ENCODE measurements at regions of chr1 and their contacts with region 1.

Region 1: DNA sequence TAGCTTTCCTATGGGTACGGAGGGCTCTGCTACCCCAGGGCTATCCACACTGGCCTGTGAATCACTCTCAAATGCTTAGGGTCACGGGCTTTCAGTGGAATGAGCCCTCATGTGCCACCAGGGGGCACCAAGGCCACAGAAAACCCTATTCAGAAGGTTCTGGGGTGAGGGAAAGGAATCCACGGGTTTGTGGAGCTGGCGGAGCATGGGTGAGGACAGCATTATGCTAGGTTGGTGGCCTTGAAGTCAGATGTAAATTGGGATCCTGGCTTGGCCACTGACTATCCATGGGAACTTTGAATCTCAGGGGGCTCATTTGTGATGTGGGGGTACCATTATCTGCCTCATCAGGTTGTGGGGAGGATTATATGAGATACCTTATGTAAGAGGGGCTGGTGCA is 5.1 kb upstream of the LAMTOR5 start:
- DNase-seq: peak; percentile 52 to 63 (median 56)
- H3K4me3 ChIP-seq: no peak overlapping the region
- H3K4me3 Mint-ChIP-seq: no peak overlapping the region
- H3K27ac ChIP-seq: no peak overlapping the region
- H3K27ac Mint-ChIP-seq: peak overlapping the region in 4 of 7 donors; percentile 5 to 84 (median 49)
- H3K4me1 ChIP-seq: peaks cover 15% of the 10 kb centered on the region
- H3K4me1 Mint-ChIP-seq: peaks cover 10 to 19% (median 13%) of the 10 kb centered on the region in 4 donors
- H3K27me3 ChIP-seq: no peaks in the 10 kb centered on the region
- H3K27me3 Mint-ChIP-seq: no peaks in the 10 kb centered on the region

Region 2: DNA sequence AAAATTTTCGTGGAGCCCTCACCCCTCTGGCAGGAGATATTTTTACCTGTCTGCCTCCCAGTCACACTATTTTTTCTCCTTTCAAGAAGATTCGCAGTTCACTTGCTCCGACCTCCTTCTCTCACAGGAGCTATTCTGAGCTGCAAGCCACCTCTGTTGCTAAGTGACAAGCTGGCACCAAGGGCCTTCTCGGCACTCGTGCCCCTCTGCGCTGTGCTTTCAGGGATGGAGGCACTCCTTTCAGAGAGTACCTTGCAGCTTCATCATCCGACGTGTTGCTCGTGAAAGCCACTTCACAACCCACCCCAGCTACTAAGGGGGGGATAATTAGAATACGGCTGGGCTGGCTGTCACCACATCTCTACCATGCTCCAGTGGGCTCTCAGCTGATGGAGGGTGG is 250.7 kb before region 1 on chr1:
- CTCF ChIA-PET with region 1: no interaction called
- POLR2A ChIA-PET with region 1: no interaction called
- intact Hi-C with region 1: no loop called
- DNase-seq: no peak
- H3K4me3 ChIP-seq: no peak overlapping the region
- H3K4me3 Mint-ChIP-seq: no peak overlapping the region
- H3K27ac ChIP-seq: no peak overlapping the region
- H3K27ac Mint-ChIP-seq: no peak overlapping the region
- H3K4me1 ChIP-seq: no peaks in the 10 kb centered on the region
- H3K4me1 Mint-ChIP-seq: no peaks in the 10 kb centered on the region
- H3K27me3 ChIP-seq: peaks cover 2% of the 10 kb centered on the region
- H3K27me3 Mint-ChIP-seq: peaks cover 21 to 26% of the 10 kb centered on the region in 2 donors

Region 3: GRCh38 chr1:110173466-110174117 is 239.0 kb before region 1 on chr1:
- CTCF ChIA-PET with region 1: no interaction called
- POLR2A ChIA-PET with region 1: no interaction called
- intact Hi-C with region 1: no loop called
- DNase-seq: no peak
- H3K4me3 ChIP-seq: no peak overlapping the region
- H3K4me3 Mint-ChIP-seq: no peak overlapping the region
- H3K27ac ChIP-seq: no peak overlapping the region
- H3K27ac Mint-ChIP-seq: no peak overlapping the region
- H3K4me1 ChIP-seq: no peaks in the 10 kb centered on the region
- H3K4me1 Mint-ChIP-seq: no peaks in the 10 kb centered on the region
- H3K27me3 ChIP-seq: no peaks in the 10 kb centered on the region
- H3K27me3 Mint-ChIP-seq: peaks cover 0 to 23% of the 10 kb centered on the region in 2 donors

Region 4: GRCh38 chr1:110384581-110385321 is 27.8 kb before region 1 on chr1:
- CTCF ChIA-PET with region 1: interaction called, 17 read pairs
- POLR2A ChIA-PET with region 1: interaction called, 4 read pairs
- intact Hi-C with region 1: no loop called
- DNase-seq: no peak
- H3K4me3 ChIP-seq: no peak overlapping the region
- H3K4me3 Mint-ChIP-seq: peak overlapping the region in 1 of 8 donors; percentile 70
- H3K27ac ChIP-seq: no peak overlapping the region
- H3K27ac Mint-ChIP-seq: peak overlapping the region in 3 of 7 donors; percentile 9 to 97 (median 70)
- H3K4me1 ChIP-seq: peaks cover 12% of the 10 kb centered on the region
- H3K4me1 Mint-ChIP-seq: peaks cover 12 to 37% (median 21%) of the 10 kb centered on the region in 4 donors
- H3K27me3 ChIP-seq: no peaks in the 10 kb centered on the region
- H3K27me3 Mint-ChIP-seq: no peaks in the 10 kb centered on the region

Measured in CD4-positive, alpha-beta memory T cell (primary cell).